ENCODE measurements at regions of chr2 and their contacts with region 1.

Region 1: DNA sequence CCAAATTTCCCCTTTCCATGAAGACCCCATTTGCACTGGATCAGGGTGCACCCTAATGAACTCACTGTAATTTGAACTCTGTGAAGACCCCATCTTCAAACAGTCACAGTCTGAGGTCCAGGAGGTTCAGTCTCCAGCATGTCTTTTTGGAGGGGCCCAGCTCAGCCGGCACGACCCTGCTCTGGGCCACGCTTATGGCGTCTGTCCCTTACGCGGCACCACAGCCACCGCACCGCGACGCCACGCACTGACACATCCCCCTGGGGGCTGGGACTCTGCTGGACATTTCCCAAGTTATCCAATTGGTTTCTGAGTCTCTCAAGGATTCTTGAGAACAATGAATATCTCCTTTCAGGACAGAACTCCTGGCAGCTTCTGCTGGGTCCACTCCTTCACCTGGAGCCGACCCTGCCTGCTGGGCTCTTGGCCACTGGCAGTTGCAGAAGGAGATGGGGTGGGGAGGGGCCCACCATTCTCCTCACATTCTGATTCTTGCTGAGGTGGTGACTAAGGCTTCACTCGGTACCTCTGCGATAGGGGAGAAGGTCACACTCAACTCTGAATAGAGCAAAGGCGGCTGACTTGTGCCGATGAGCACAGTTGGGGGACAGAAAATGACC is 124.0 kb downstream of the RTP5 start:
- DNase-seq: no peak
- ATAC-seq: no peak
- H3K4me3 ChIP-seq: no peak overlapping the region
- H3K27ac ChIP-seq: no peak overlapping the region
- H3K4me1 ChIP-seq: no peaks in the 10 kb centered on the region
- H3K27me3 ChIP-seq: peaks cover 24% of the 10 kb centered on the region
- CTCF ChIP-seq: no peak
- POLR2A ChIP-seq: no peak
- RAD21 ChIP-seq: no peak

Region 2: DNA sequence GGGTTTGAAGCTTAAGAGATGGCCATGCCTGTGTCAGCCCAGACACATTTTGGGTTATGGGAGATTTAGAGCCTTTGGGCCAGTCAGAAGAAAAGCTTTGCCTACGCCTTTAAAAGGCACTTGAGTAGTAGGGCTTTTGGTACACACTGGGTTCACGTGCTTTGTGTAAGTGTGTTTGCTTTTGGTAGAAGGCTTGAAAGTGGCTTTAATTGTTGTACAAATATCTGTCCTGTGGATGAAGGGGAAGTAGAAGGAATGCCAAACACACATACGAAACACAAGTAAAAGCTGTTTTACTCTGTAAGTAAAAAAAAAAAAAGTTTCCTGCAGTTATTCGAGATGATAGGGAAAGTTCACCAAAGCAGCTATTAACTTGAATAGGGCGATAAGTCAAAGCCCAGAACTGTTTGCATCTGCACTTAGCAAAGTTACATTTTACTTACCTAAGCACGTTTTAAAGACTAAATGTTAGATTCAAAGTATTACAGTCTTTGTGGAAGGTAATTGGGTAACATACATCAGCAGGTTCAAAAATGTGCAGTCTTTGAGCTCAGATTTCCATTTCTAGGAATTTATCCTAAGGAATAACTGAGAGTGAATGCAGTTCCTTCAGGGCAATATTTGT is 560.6 kb before region 1 on chr2:
- CTCF ChIA-PET with region 1: no interaction called
- POLR2A ChIA-PET with region 1: interaction called, 11 read pairs
- dilution Hi-C with region 1: no loop called
- in situ Hi-C with region 1: no loop called
- intact Hi-C with region 1: no loop called
- DNase-seq: no peak
- ATAC-seq: no peak
- H3K4me3 ChIP-seq: no peak overlapping the region
- H3K27ac ChIP-seq: no peak overlapping the region
- H3K4me1 ChIP-seq: no peaks in the 10 kb centered on the region
- H3K27me3 ChIP-seq: no peaks in the 10 kb centered on the region
- CTCF ChIP-seq: no peak
- POLR2A ChIP-seq: no peak
- RAD21 ChIP-seq: no peak

Region 3: GRCh38 chr2:241637000-241637791 is 356.3 kb before region 1 on chr2 and contains the starts of genes ATG4B and THAP4:
- CTCF ChIA-PET with region 1: no interaction called
- POLR2A ChIA-PET with region 1: no interaction called
- dilution Hi-C with region 1: no loop called
- in situ Hi-C with region 1: no loop called
- intact Hi-C with region 1: no loop called
- DNase-seq: peak; percentile 82
- ATAC-seq: peak; percentile 87
- H3K4me3 ChIP-seq: peak within 1 kb of the TSS; percentile 100
- H3K27ac ChIP-seq: peak within 1 kb of the TSS; percentile 100
- H3K4me1 ChIP-seq: peaks cover 3% of the 10 kb centered on the region; the same call in 1 of the 2 replicates
- H3K27me3 ChIP-seq: no peaks in the 10 kb centered on the region
- CTCF ChIP-seq: no peak
- POLR2A ChIP-seq: peak; percentile 82
- RAD21 ChIP-seq: no peak
- total RNA-seq, gene ATG4B: 102 and 146 TPM in 2 replicates
- total RNA-seq, gene THAP4: 33.9 and 42.2 TPM in 2 replicates

Region 4: DNA sequence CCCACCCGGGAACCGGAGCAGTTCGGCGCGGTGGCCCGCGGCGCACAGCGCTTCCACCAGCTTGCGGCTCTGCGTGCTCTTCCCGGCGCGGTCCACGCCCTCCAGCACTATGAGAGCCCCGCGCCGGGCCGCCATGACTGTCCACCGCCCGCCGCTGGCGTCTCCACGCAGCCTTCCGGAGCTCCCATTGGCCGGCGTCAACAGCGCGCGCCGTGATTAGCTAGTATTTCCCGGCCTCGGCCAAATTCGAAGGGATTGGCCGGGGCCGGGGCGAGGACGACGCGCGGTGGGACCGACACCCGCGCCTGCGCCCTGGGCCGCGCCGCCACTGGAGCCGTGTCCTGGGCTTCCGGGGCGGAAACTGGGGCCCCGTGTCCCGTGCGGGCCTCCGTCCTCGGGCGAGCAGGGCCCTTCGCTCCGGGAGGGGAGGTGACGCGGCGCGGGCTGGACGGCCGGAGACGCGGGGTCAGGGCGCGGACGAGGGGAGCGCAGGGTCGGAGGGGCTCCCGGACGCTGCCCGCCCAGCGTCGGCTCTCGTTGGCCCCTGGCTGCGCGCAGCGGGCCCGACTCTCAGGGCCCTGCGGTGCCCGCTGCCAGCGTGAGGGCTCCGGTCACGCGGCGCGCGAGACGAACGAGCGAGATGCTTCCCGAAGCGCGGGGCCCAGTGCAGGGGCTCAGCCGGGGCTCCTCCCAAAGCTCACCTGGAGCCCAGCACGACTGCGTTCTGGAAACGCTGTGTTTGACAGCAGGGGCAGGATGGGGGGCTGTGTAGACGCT is 306.7 kb before region 1 on chr2 and contains the start of gene DTYMK:
- CTCF ChIA-PET with region 1: no interaction called
- POLR2A ChIA-PET with region 1: no interaction called
- dilution Hi-C with region 1: no loop called
- in situ Hi-C with region 1: no loop called
- intact Hi-C with region 1: no loop called
- DNase-seq: peak; percentile 93
- ATAC-seq: peak; percentile 97
- H3K4me3 ChIP-seq: peak within 1 kb of the TSS; percentile 88
- H3K27ac ChIP-seq: peak within 1 kb of the TSS; percentile 90
- H3K4me1 ChIP-seq: peaks cover 5% of the 10 kb centered on the region
- H3K27me3 ChIP-seq: no peaks in the 10 kb centered on the region
- CTCF ChIP-seq: no peak
- POLR2A ChIP-seq: peak; percentile 89
- RAD21 ChIP-seq: no peak
- total RNA-seq, gene DTYMK: 31.7 and 32.8 TPM in 2 replicates

Region 5: GRCh38 chr2:241950413-241951315 is 42.8 kb before region 1 on chr2:
- CTCF ChIA-PET with region 1: no interaction called
- POLR2A ChIA-PET with region 1: no interaction called
- dilution Hi-C with region 1: no loop called
- in situ Hi-C with region 1: no loop called
- intact Hi-C with region 1: no loop called
- DNase-seq: peak; percentile 49
- ATAC-seq: peak; percentile 95
- H3K4me3 ChIP-seq: no peak overlapping the region
- H3K27ac ChIP-seq: no peak overlapping the region
- H3K4me1 ChIP-seq: no peaks in the 10 kb centered on the region
- H3K27me3 ChIP-seq: peaks cover 20% of the 10 kb centered on the region
- CTCF ChIP-seq: peak; percentile 94
- POLR2A ChIP-seq: 0 out of 2 replicates have a peak, but pooled peaks have one; percentile 35
- RAD21 ChIP-seq: peak; percentile 91

Region 6: DNA sequence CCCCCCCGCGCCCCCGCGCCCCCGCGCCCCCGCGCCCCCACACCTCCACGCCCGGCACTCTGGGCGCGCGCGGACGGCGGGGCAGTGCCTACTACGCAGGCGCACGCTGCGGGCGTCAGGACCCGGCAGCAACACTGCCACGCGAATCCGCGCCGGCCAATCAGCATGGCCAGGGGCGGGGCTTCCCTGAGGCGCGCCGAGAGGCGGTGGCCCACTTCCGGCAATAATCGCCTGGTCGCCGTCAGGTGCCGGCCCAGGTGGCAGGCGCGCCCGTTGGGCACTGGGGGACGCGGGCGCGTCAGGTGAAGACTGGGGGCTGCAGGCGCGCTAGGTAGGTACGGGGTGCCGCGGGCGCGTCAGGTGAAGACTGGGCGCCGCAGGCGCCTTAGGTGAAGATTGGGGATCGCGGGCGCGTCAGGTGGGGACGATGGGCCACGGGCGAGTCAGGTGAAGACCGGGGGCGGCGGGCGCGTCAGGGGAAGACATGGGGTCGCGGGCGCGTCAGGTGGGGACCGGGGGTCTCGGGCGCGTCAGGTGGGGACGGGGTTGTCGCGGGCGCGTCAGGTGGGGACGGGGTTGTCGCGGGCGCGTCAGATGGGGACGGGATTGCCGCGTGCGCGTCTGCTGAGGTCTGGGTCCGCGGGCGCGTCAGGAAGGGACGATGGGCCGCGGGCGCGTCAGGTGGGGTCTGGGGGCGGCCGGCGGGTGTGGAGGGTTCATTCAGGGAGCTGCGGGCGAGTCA is 95.1 kb after region 1 on chr2:
- CTCF ChIA-PET with region 1: no interaction called
- POLR2A ChIA-PET with region 1: no interaction called
- dilution Hi-C with region 1: no loop called
- in situ Hi-C with region 1: no loop called
- intact Hi-C with region 1: no loop called
- DNase-seq: peak; percentile 73
- ATAC-seq: peak; percentile 100
- H3K4me3 ChIP-seq: peak overlapping the region; percentile 97
- H3K27ac ChIP-seq: no peak overlapping the region; the same call in 1 of the 2 replicates
- H3K4me1 ChIP-seq: 0 out of 2 replicates have a peak, but pooled peaks cover 1% of the 10 kb centered on the region
- H3K27me3 ChIP-seq: peaks cover 1% of the 10 kb centered on the region
- CTCF ChIP-seq: no peak
- POLR2A ChIP-seq: no peak
- RAD21 ChIP-seq: no peak

Measured in IMR-90 (cell line).